Heart right ventricle (tissue), 16 donors: ENCODE measurements at regions of chr2 and their contacts with region 1.

Region 1: GRCh38 chr2:108944601-108945331 is 44.3 kb downstream of the EDAR start:
- DNase-seq: no peak
- ATAC-seq: peak in 4 of 8 donors; percentile 9 to 31 (median 16)
- H3K4me3 ChIP-seq: no peak overlapping the region
- H3K27ac ChIP-seq: no peak overlapping the region
- H3K4me1 ChIP-seq: peaks cover 0 to 7% (median 0%) of the 10 kb centered on the region in 9 donors
- H3K27me3 ChIP-seq: peaks cover 0 to 5% (median 0%) of the 10 kb centered on the region in 7 donors
- CTCF ChIP-seq: peak in 2 of 9 donors; percentile 8 to 13

Region 2: DNA sequence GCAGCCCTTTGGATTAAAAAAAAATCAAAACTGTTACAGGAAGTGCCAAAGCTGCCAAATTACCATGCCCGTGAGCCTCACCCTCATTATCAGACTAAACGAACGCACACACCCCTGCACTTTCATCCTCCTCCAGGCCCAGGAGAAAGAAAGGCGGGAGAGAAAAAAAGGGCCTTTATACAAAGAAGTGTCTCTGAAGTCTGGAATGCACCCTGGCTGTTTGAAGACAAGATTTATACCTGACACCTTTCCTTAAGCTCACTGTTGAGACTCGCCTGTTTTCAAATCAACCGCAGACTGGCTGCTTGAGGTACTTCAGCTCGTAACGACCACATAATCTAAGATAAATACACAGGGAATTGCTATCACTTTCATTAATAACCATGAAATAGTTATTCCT is 13.2 kb after region 1 on chr2:
- intact Hi-C with region 1: loop called in 1 of 10 experiments (anchors 1 kb)
- DNase-seq: no peak
- ATAC-seq: no peak
- H3K4me3 ChIP-seq: no peak overlapping the region
- H3K27ac ChIP-seq: no peak overlapping the region
- H3K4me1 ChIP-seq: peaks cover 0 to 20% (median 0%) of the 10 kb centered on the region in 9 donors
- H3K27me3 ChIP-seq: no peaks in the 10 kb centered on the region
- CTCF ChIP-seq: no peak

Region 3: DNA sequence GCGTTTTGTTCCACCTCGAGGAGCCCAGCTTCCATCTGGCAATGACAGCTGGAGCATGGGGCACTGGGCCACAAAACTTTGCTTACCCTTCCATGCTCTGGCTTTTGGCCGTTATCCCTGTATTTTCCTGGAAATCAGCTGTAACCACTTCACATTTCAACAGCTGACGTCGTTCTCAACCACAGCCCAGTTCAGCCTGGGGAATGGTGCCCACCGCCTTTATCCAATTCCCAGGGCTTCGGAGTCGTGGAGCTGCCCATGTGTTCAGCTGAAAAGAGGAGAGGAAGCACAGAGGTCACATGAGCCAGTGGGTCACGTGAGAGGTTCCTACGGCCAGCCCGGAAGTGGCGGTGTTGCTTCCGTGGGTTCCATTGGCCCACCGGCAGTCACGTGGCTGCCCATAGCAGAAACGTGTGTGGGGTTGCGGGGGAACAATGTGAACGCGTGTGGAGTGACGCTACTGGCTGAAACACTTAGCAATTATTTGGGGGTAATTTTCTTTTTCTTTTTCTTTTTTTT is 61.0 kb after region 1 on chr2:
- intact Hi-C with region 1: no loop called
- DNase-seq: no peak
- ATAC-seq: peak in 2 of 8 donors; percentile 55 to 67
- H3K4me3 ChIP-seq: no peak overlapping the region
- H3K27ac ChIP-seq: no peak overlapping the region
- H3K4me1 ChIP-seq: no peaks in the 10 kb centered on the region
- H3K27me3 ChIP-seq: peaks cover 0 to 2% (median 0%) of the 10 kb centered on the region in 7 donors
- CTCF ChIP-seq: no peak